Activated naive CD4-positive, alpha-beta T cell treated with anti-CD3 and anti-CD28 coated beads for 36 hours (primary cell): ENCODE measurements at regions of chr12 and their contacts with region 1.

Region 1: DNA sequence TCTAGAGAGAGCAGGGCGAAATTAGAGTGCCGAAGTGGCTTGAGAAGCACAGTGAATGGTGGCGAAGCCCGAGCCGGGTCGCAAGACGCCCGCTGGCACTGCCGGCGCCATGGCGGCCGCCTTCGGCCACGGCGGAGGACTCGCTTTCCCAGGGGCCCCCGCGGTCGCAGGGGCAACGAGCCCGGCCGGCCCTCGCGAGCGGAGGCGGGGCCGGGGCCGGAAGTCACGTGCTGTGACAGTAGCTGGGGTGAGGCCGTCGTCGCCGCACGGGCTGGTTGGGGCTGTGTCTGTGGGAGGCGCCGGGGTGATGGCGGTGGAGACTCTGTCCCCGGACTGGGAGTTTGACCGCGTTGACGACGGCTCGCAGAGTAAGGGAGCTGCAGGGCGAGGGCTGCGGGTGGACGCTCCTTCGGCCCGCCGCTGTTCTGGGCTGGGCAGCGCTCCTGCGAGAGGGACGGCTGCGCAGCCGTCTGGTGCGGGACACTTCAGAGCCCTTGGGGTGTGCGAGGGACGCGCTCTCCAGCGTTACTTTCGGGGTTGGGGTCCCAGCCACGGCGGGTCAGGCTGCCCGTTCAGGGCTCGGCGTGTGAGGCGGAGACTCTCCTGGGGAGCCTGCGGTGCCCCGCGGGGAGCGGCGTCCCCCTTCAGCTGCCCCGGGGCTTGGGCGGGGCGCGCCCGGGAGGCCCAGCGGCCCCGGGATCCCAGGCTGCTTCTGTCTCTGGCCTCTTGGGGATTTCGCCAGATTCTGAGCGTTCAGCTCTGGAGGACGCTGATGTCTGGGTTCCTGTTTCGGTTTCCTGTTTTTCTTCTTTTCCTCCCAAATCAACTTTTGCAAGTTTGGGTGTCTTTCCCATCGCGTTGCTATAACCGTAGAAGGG is at the start of gene WASHC4:
- DNase-seq: peak; percentile 95
- H3K4me3 Mint-ChIP-seq: peak within 1 kb of the TSS; percentile 90
- H3K27ac Mint-ChIP-seq: peak within 1 kb of the TSS; percentile 91
- H3K4me1 Mint-ChIP-seq: peaks cover 35% of the 10 kb centered on the region
- H3K27me3 Mint-ChIP-seq: peaks cover 13% of the 10 kb centered on the region
- total RNA-seq, gene WASHC4: 23.7 to 26.0 TPM

Region 2: GRCh38 chr12:103965590-103966504 is 1141.9 kb before region 1 on chr12 and contains the start of gene TDG:
- CTCF ChIA-PET with region 1: no interaction called
- intact Hi-C with region 1: loop called (anchors 5 kb)
- DNase-seq: peak; percentile 99
- H3K4me3 Mint-ChIP-seq: peak within 1 kb of the TSS; percentile 96
- H3K27ac Mint-ChIP-seq: peak within 1 kb of the TSS; percentile 97
- H3K4me1 Mint-ChIP-seq: peaks cover 48% of the 10 kb centered on the region
- H3K27me3 Mint-ChIP-seq: no peaks in the 10 kb centered on the region
- total RNA-seq, gene TDG: 18.0 to 19.3 TPM

Region 3: DNA sequence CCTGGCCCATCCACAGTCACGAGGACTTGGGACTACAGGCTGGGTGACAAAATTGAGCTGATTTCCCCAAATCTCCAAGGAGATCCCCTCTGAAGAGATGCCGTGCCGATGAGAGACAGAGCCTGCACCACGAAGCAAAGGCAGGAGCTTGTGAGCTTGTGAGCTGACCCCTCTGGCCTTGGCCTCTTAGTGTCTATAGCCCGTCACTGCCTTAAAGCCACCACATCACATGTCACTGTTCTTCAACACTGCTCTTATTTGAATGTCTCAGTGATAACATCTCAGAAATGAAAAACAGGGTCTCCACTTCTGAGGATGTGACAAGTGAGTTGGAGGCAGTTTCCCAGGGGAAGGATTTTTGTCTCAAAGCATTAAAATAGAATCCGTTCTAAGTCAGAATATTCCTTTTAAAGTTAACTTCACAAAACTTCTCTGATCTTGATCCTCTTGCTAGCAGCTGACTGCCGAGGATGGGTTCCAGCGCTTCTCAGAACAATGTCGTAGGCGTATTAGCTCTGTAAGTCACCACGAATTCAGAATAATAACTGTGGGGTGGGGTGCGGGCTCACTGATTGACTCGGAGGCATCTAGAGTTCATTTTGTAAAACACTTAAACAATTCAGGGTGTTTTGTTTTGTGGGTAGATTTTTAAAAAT is 613.5 kb before region 1 on chr12:
- CTCF ChIA-PET with region 1: no interaction called
- intact Hi-C with region 1: loop called (anchors 5 kb)
- DNase-seq: peak; percentile 85
- H3K4me3 Mint-ChIP-seq: peak overlapping the region; percentile 52
- H3K27ac Mint-ChIP-seq: peak overlapping the region; percentile 70
- H3K4me1 Mint-ChIP-seq: peaks cover 82% of the 10 kb centered on the region
- H3K27me3 Mint-ChIP-seq: no peaks in the 10 kb centered on the region

Region 4: DNA sequence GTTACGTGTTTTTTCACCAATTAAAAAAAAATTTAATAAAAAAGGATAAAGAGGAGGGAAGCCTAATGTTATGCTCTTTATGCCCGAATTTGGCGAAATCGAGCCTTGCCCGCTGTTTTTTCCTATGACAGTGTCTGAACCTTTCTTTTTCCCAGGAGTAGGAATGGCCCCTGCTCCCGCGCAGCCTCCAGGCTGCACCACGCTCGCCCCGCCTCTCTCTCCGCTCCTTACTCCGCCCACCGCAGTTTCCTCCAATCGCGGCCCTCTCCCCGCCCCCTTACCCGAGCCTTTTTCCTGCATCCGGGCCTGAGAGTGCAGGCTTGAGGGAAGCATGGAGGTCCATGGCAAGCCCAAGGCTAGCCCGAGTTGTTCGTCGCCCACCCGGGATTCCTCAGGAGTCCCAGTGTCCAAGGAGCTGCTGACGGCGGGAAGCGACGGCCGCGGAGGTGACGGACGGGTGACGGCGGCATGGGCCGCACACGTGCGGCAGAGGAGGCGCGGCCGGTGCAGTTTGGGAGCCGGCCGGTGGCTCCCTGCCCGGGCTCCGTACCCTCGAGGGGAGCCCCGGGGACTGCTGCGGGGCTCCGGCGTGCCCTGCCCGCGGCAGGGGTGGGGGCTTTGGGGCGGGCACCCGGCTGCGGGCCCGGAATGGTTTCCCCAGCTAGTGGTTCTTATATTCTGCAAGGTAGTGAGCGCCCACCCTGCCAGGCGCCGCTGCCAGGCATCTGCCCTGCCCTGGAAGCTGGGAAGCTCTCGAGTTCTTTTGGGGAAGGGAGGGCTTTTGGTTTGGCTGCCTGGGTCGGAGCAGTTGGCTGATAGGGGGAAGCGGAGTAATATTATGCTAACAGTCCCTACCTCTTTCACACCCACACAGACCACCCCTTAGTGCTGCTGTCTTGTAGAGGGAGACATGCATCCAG is 121.5 kb before region 1 on chr12 and contains the start of gene NOPCHAP1:
- CTCF ChIA-PET with region 1: no interaction called
- intact Hi-C with region 1: loop called (anchors 1 kb)
- DNase-seq: peak; percentile 91
- H3K4me3 Mint-ChIP-seq: peak within 1 kb of the TSS; percentile 86
- H3K27ac Mint-ChIP-seq: peak within 1 kb of the TSS; percentile 17
- H3K4me1 Mint-ChIP-seq: peaks cover 40% of the 10 kb centered on the region
- H3K27me3 Mint-ChIP-seq: no peaks in the 10 kb centered on the region
- total RNA-seq, gene NOPCHAP1: 30.8 to 33.4 TPM

Region 5: GRCh38 chr12:105235732-105236476 is 128.2 kb after region 1 on chr12 and contains the start of gene APPL2:
- CTCF ChIA-PET with region 1: no interaction called
- intact Hi-C with region 1: loop called (anchors 1 kb)
- DNase-seq: peak; percentile 86
- H3K4me3 Mint-ChIP-seq: peak within 1 kb of the TSS; percentile 85
- H3K27ac Mint-ChIP-seq: peak within 1 kb of the TSS; percentile 86
- H3K4me1 Mint-ChIP-seq: peaks cover 37% of the 10 kb centered on the region
- H3K27me3 Mint-ChIP-seq: no peaks in the 10 kb centered on the region
- total RNA-seq, gene APPL2: 12.7 to 13.5 TPM

Region 6: GRCh38 chr12:105504286-105504685 is 396.6 kb after region 1 on chr12:
- CTCF ChIA-PET with region 1: no interaction called
- intact Hi-C with region 1: no loop called
- DNase-seq: no peak
- H3K4me3 Mint-ChIP-seq: no peak overlapping the region
- H3K27ac Mint-ChIP-seq: no peak overlapping the region
- H3K4me1 Mint-ChIP-seq: no peaks in the 10 kb centered on the region
- H3K27me3 Mint-ChIP-seq: peaks cover 17% of the 10 kb centered on the region

Region 7: DNA sequence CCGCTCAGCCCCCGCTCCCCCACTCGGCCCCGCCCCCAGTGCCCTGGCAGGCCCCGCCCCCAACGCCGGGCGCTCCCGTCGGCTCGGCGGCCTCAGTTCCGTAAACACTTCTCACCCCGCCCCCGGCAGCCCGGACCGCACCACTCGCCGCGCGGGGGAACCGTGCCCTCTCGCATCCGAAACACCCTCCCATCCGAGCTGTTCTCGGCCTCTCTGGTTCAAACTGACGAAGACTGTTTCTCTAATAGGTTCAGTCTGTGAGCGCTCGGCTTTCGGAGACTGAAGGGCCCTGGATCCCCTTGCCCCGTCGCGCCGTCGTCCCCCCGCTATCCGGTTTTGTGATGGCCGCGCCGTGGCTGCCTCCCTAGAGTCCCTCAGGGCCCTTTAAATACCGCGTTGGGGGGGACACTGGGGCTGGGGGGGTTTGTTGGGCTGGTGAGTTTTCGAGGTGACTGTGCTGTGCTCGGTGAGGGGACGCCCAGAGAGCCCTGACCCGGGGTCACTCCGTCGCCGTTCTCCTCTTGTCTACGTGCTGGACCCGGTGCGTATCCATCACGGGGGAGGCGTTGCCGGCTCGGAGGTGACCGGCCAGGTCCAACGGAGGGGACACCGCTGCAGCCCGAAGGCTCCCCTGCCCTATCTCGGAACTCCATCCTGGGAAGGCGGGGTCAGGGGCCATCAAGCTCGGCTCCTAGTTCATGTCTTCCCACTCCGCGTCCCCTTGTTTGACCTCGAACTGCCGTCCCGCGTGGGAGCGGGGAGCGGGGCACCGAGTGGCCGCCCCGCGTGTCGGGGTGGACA is 1194.9 kb after region 1 on chr12 and contains the start of gene TCP11L2:
- CTCF ChIA-PET with region 1: no interaction called
- intact Hi-C with region 1: loop called (anchors 5 kb)
- DNase-seq: peak; percentile 88
- H3K4me3 Mint-ChIP-seq: peak within 1 kb of the TSS; percentile 93
- H3K27ac Mint-ChIP-seq: peak within 1 kb of the TSS; percentile 99
- H3K4me1 Mint-ChIP-seq: peaks cover 55% of the 10 kb centered on the region
- H3K27me3 Mint-ChIP-seq: no peaks in the 10 kb centered on the region
- total RNA-seq, gene TCP11L2: 9.2 to 10.3 TPM